AG04449 (cell line): ENCODE measurements at regions of chr11 and their contacts with region 1.

Region 1: GRCh38 chr11:103609117-103610066 is 427.0 kb upstream of the DDI1 start:
- DNase-seq: peak; percentile 81
- H3K4me3 ChIP-seq: no peak overlapping the region
- CTCF ChIP-seq: peak; percentile 82

Region 2: DNA sequence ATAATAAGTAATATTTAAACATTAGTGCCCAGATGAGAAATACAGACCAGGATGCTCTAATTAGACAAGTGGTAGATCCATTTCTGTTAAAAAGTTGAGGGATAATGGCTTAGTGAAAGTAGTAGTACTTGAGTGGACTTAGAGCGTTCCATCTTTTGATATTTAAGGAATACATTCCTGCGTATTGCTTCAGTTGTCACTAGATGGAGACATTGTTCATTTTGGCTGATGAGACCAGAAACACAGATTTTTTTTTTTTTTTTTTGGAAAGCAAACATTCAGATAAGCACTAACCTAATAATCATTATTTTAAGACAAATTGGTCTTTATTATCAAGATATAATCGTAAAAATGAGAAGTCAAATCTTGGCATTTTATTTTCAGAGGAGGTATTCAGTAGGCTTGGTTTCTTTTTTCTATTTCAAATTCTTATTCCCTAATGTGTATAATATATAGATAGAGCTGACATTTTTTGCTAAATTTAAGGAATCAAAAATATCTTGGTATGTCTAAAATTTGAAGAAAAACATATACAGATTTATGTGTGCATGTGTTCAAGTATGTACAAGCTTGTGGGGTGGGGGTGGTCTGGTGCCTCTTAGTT is 407.2 kb before region 1 on chr11:
- CTCF ChIA-PET with region 1: interaction called, 29 read pairs
- POLR2A ChIA-PET with region 1: no interaction called
- DNase-seq: no peak
- H3K4me3 ChIP-seq: no peak overlapping the region
- CTCF ChIP-seq: peak; percentile 41

Region 3: GRCh38 chr11:103453915-103454709 is 155.3 kb before region 1 on chr11:
- CTCF ChIA-PET with region 1: no interaction called
- POLR2A ChIA-PET with region 1: no interaction called
- DNase-seq: no peak
- H3K4me3 ChIP-seq: no peak overlapping the region
- CTCF ChIP-seq: no peak

Region 4: GRCh38 chr11:103480421-103480820 is 129.0 kb before region 1 on chr11:
- CTCF ChIA-PET with region 1: no interaction called
- POLR2A ChIA-PET with region 1: no interaction called
- DNase-seq: no peak
- H3K4me3 ChIP-seq: no peak overlapping the region
- CTCF ChIP-seq: no peak

Region 5: GRCh38 chr11:103546236-103546635 is 63.2 kb before region 1 on chr11:
- CTCF ChIA-PET with region 1: no interaction called
- POLR2A ChIA-PET with region 1: no interaction called
- DNase-seq: no peak
- H3K4me3 ChIP-seq: no peak overlapping the region
- CTCF ChIP-seq: no peak

Region 6: DNA sequence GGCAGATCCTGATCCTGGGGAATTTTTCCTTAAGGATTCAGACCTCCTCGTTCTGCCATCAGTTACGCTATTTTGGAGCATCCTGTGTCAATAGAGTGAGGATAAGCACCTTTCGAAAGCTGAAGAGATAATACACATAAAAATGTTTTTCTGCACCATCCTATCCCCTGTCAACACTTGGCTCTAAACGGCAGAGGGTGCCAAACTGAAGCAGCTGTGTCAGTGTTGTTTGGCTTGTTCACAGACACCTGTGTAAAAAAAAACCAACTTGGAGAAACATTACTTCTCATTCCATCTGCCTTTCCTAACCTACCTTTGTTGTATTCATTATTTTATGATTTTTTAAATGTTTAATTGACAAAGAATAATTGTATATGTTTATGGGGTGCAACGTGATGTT is 10.1 kb after region 1 on chr11:
- CTCF ChIA-PET with region 1: interaction called, 12 read pairs
- POLR2A ChIA-PET with region 1: no interaction called
- DNase-seq: no peak
- H3K4me3 ChIP-seq: no peak overlapping the region
- CTCF ChIP-seq: no peak

Region 7: GRCh38 chr11:103709371-103709770 is 100.0 kb after region 1 on chr11:
- CTCF ChIA-PET with region 1: no interaction called
- POLR2A ChIA-PET with region 1: no interaction called
- DNase-seq: no peak
- H3K4me3 ChIP-seq: no peak overlapping the region
- CTCF ChIP-seq: no peak